Cardiac septum (tissue), 1 donor: ENCODE measurements at regions of chr17 and their contacts with region 1.

Region 1: GRCh38 chr17:38667099-38667786 is 7.5 kb downstream of the EPOP start:
- DNase-seq: no peak

Region 2: DNA sequence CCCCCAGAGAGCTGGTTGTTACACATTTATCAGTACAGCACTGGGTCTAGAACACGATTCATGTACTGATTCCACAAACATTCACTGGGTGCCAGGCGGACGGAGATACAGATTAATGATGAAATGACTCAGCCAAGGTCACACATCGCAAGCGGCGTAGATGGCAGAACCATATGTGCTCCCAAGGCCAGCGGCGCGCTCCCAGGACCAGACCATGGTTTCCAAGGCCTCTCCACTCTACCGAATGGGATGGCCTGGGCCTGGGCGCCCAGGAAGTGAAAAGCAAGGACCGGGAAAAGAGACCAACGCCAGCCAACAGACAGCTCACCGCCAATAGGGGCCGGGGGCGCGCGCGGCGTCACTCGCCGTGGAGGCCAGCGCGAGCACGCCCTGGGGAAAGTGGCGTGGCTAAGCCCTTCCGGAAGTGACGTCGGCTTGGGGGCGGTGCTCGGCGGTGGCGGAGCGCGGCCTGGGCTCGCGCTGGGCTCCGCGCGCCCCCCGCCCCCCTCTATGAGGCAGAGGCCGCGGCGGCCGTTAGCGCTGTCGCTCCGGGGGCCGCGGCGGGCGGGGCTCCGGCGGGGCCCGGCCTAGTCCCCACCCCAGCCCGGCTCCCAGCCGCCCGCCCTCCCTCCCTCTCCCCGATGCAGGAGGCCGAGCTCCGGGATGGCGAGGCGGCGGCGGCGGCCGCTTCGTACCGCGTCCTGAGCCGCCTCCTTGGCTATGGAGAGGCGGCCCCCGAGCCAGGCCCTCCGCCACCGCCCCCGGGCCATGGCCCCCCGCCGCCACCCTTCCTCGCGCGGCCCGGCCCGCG is 315.6 kb before region 1 on chr17 and contains the start of gene SOCS7:
- intact Hi-C with region 1: loop called (anchors 10 kb)
- DNase-seq: peak; percentile 97
- total RNA-seq, gene SOCS7: 17.8 TPM

Region 3: DNA sequence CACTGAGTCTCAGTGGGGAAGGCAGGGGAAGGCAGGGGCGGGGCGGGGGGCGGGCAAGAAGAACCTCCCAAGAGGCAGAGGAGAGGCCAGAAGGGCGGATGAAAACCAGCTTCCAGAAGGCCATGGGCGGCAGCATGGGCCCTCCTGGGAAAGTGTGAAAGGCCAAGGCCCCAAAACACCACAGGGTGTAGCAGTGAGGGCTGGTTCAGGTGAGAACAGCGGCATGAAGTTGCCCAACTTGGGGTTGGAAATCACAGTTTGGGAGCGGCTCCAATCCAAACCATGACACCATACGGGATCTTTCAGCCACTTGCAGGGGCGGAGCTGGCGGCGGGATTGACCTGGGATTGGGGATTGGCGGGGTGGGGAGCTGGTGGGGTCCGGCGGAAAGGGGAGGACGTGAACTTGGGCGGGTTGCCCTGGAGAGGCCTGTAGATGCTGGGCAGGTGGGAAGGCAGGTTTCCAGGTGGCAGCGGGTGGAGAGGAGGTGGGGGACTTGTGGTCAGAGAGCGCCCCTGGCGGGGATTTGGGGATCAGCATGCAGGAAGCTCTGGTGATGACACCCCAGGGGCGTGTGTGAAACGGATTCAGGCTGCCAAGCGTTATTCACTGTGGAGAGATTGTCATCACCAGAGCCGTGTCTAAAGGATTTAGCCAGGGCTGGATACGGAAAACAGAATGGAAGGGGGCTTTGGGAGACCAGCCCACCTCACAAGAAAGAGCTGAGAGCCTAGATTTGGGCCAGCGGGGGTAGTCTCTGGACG is 158.1 kb before region 1 on chr17:
- intact Hi-C with region 1: loop called (anchors 5 kb)
- DNase-seq: peak; percentile 82

Region 4: DNA sequence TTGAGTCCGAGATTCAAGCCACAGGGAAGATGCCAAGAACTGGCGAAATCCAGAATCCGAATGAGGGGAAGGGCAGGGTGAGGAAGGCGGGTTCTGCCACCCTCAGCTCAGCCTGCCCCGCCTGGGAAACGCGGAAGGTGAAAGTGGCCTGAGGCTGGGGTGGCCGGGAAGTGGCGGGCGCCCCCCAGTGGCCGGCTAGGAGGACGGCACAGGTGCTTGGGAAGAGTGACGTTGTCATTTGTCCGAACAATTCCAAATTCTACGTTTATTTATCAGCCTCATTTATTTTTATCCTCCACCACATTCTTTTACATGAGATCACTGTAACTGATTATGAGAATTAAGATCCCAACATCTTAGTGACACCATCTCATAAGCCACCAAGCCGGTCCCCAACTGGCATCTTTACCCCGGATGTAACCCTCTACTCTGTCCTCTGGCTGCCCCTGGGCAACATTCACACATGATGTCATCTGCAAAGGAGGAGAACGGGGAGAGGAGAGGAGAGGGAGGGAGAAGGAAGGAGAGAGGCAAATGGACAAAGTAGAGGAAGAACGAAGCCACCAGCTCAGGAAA is 82.8 kb before region 1 on chr17:
- intact Hi-C with region 1: loop called (anchors 5 kb)
- DNase-seq: no peak

Region 5: DNA sequence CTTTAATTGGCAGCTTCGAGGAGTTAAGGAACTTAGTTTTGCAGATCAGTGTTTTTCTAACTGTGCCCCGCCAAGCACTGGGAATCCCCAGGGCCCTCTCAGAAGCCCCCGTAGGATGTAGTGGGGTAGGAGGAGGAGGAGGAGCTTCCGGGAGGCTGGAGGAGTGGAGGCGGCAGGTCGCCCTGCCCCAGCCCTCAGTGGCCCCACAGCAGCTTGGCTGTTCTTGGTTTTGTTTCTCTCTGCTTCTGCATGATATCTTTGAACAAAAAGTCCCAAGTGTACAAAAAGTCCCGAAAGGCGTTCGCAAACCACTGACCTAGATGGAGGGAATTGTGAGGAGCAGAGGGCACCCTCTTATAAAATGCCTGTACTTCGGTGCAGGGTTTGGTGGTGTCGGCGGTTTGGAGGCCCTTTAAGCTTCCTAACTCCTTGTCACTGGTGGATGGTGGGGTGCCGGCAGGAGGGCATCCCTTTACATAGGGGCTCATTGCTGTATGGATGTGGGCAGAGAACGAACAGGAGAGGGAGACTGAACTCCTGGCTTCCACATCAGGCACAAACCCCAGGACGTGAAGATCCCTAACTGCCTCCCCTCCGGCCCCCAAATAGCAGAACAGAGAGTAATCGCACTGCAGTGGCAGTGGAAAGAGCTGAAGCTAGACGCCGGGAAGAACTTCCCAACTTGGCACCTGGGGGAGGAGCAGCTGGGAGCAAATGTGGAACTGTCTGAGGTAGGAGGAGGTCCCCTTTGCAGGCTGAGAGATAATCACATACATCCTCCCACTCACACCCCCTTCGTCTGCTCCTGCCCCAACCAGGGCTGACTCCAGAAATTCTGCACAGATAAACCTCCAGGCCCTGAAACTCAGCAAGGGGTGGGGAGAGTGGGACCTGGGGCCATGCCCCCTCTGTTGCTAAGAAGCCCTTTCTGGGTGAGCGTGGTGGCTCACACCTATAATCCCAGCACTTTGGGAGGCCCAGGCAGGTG is 12.5 kb before region 1 on chr17:
- intact Hi-C with region 1: no loop called
- DNase-seq: no peak